ENCODE measurements at regions of chr1 and their contacts with region 1.

Region 1: GRCh38 chr1:41416552-41417334 is 55.5 kb downstream of the FOXO6 start:
- DNase-seq: peak; percentile 66 to 75 (median 66)
- ATAC-seq: peak; percentile 79 to 90 (median 86)
- H3K4me3 ChIP-seq: no peak overlapping the region
- H3K27ac ChIP-seq: no peak overlapping the region
- H3K4me1 ChIP-seq: no peaks in the 10 kb centered on the region
- H3K27me3 ChIP-seq: no peaks in the 10 kb centered on the region
- CTCF ChIP-seq: peak; percentile 82 to 90 (median 84)
- POLR2A ChIP-seq: no peak

Region 2: GRCh38 chr1:40625066-40625465 is 791.7 kb before region 1 on chr1:
- intact Hi-C with region 1: no loop called
- DNase-seq: peak in 2 of 3 donors; percentile 52 to 62
- ATAC-seq: peak; percentile 86 to 96 (median 92)
- H3K4me3 ChIP-seq: no peak overlapping the region
- H3K27ac ChIP-seq: no peak overlapping the region
- H3K4me1 ChIP-seq: peaks cover 0 to 5% (median 0%) of the 10 kb centered on the region in 4 donors
- H3K27me3 ChIP-seq: no peaks in the 10 kb centered on the region
- CTCF ChIP-seq: peak; percentile 40 to 55 (median 48)
- POLR2A ChIP-seq: no peak

Region 3: DNA sequence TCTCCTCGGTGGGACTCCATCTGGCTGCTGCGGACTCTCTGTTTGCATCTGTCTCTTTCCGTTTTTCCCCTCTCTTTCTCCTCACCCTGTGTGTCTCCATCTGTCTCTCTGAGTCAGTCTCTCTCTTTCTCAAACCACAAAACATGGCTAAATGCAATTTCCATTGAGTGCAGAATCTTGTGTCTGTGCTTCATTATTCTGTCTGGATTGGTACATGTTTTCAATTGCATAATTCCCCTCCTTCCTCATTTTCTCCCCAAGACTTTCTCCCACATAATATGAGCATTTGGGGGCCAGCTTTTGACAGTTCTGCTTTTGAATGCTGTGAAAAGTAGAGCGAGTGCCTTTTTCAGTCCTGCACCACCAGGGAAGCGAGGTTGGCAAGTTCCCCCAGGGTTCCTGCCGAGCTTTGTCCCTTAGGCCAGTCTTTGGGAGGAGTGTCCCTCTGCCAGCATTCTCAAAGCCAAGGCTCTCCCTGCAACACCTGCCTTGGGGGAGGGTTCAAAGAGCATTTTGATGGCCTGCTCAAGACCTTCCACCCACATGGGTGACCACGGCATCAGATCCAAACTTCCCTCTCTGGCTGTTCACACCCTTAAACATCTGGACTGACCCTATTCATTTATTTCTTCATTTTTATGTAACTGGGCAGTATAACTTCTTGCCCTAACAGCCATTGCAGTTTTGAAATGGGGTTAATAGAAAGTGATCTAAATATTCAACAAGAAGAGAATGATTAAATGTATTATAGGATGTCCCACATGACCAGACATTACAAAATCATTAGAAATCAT is 141.8 kb before region 1 on chr1:
- intact Hi-C with region 1: loop called (anchors 5 kb)
- DNase-seq: no peak
- ATAC-seq: peak in 3 of 4 donors; percentile 32 to 47 (median 43)
- H3K4me3 ChIP-seq: no peak overlapping the region
- H3K27ac ChIP-seq: no peak overlapping the region
- H3K4me1 ChIP-seq: no peaks in the 10 kb centered on the region
- H3K27me3 ChIP-seq: no peaks in the 10 kb centered on the region
- CTCF ChIP-seq: no peak
- POLR2A ChIP-seq: no peak

Region 4: DNA sequence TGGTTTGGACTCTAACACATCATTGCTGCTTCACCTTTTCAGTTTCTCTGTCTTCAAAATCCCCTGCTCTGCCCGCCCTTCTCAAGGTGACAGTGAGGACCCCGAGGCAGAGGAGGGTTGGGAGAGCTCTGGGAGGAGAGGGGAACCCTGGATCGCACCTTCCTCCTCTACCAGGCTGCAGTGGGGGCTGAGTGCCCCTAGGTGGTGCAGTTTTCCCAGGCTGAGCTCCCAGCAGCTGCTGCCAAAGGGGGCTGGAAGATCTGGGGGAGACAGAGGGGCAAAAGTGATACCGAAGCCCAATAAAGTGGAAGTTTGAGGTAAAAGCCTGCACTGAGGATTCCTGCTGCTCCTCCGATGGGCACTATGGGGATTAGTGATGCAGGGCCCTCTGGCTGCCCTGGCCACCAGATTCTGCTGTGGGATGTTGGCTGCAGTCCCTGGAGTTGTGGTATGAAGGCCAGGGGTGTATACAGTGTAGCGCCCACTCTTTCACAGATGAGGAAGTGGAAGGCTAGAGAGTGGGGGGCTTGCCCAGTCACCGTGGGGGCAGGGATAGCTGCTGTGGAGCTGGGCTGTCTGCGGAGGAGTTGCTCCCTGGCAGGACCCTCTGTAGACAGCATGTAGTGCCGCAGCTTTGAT is 133.9 kb before region 1 on chr1:
- intact Hi-C with region 1: loop called in 1 of 2 experiments (anchors 5 kb)
- DNase-seq: peak in 2 of 3 donors; percentile 28 to 57
- ATAC-seq: peak; percentile 67 to 77 (median 70)
- H3K4me3 ChIP-seq: no peak overlapping the region
- H3K27ac ChIP-seq: no peak overlapping the region
- H3K4me1 ChIP-seq: no peaks in the 10 kb centered on the region
- H3K27me3 ChIP-seq: no peaks in the 10 kb centered on the region
- CTCF ChIP-seq: peak; percentile 58 to 71 (median 68)
- POLR2A ChIP-seq: no peak

Measured in right lobe of liver (tissue), 6 donors.